ENCODE measurements at regions of chr4 and their contacts with region 1.

Region 1: GRCh38 chr4:183229397-183229796 is 90.7 kb downstream of the CLDN22 start:
- DNase-seq: no peak
- ATAC-seq: no peak
- H3K4me3 ChIP-seq: no peak overlapping the region
- H3K4me3 Mint-ChIP-seq: no peak overlapping the region
- H3K27ac ChIP-seq: no peak overlapping the region
- H3K27ac Mint-ChIP-seq: no peak overlapping the region
- H3K4me1 ChIP-seq: no peaks in the 10 kb centered on the region
- H3K4me1 Mint-ChIP-seq: no peaks in the 10 kb centered on the region
- H3K27me3 ChIP-seq: no peaks in the 10 kb centered on the region
- H3K27me3 Mint-ChIP-seq: no peaks in the 10 kb centered on the region

Region 2: DNA sequence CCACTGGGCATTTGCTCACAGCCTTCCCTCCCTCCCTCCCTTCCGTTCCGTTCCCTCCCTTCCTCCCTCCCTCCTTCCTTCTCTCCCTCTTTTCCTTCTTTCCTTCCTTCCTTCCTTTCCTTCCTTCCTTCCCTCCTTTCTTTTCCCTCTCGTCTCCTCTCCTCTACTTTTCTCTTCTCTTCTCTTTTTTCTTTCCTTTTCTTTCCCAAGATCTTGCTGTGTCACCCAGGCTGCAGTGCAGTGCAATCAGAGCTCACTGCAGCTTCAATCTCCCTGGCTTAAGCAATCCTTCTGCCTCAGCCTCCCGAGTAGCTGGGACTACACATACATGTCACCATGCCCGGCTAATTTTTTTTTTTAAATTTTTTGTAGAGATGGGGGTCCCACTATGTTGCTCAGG is 248.7 kb after region 1 on chr4:
- CTCF ChIA-PET with region 1: no interaction called
- POLR2A ChIA-PET with region 1: interaction called, 4 to 11 read pairs
- DNase-seq: no peak
- ATAC-seq: no peak
- H3K4me3 ChIP-seq: no peak overlapping the region
- H3K4me3 Mint-ChIP-seq: no peak overlapping the region
- H3K27ac ChIP-seq: no peak overlapping the region
- H3K27ac Mint-ChIP-seq: no peak overlapping the region
- H3K4me1 ChIP-seq: no peaks in the 10 kb centered on the region
- H3K4me1 Mint-ChIP-seq: no peaks in the 10 kb centered on the region
- H3K27me3 ChIP-seq: peaks cover 0 to 5% of the 10 kb centered on the region in 2 experiments
- H3K27me3 Mint-ChIP-seq: peaks cover 2 to 4% of the 10 kb centered on the region in 2 donors

Region 3: GRCh38 chr4:183600189-183600685 is 370.8 kb after region 1 on chr4:
- CTCF ChIA-PET with region 1: no interaction called
- POLR2A ChIA-PET with region 1: no interaction called
- DNase-seq: peak in 14 of 35 experiments; percentile 2 to 45 (median 10)
- ATAC-seq: no peak
- H3K4me3 ChIP-seq: no peak overlapping the region
- H3K4me3 Mint-ChIP-seq: no peak overlapping the region
- H3K27ac ChIP-seq: no peak overlapping the region
- H3K27ac Mint-ChIP-seq: no peak overlapping the region
- H3K4me1 ChIP-seq: no peaks in the 10 kb centered on the region
- H3K4me1 Mint-ChIP-seq: no peaks in the 10 kb centered on the region
- H3K27me3 ChIP-seq: peaks cover 0 to 4% of the 10 kb centered on the region in 2 experiments
- H3K27me3 Mint-ChIP-seq: no peaks in the 10 kb centered on the region